ENCODE measurements at regions of chr6 and their contacts with region 1.

Region 1: DNA sequence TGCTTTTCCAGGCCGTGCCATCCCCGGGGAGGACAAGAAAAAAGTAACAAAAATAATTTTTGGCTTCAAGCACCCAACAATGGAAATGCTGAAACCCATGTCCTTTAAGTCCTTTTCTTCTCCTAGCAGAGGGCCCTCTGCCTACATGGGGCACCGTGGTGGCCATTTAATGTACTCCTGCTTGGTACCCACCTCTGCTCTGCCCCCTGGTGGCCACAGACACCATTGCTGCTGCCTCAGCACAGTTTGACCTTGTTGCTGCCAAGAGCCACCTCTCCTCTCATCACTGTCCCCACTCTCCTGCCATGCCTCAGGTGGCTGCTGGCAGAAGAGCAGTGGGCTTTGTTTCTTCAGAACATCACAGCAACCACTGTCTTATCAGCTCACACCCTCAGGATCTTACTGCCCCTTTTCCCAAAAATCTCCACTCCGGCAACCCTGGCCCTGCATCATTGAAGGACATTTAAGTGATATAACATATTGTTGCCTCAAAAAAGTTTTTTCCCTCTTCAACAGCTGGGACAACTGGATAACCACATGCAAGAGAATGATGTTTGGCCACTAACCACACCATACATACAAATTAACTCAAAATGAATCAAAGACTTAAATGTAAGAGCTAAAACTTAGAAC is 12.9 kb upstream of the ARMC2 start:
- DNase-seq: peak; percentile 71
- H3K4me3 Mint-ChIP-seq: no peak overlapping the region
- H3K27ac Mint-ChIP-seq: no peak overlapping the region
- H3K4me1 Mint-ChIP-seq: peaks cover 26% of the 10 kb centered on the region
- H3K27me3 Mint-ChIP-seq: peaks cover 20% of the 10 kb centered on the region

Region 2: GRCh38 chr6:108476847-108477430 is 358.4 kb before region 1 on chr6:
- intact Hi-C with region 1: no loop called
- DNase-seq: no peak
- H3K4me3 Mint-ChIP-seq: no peak overlapping the region
- H3K27ac Mint-ChIP-seq: no peak overlapping the region
- H3K4me1 Mint-ChIP-seq: peaks cover 2% of the 10 kb centered on the region
- H3K27me3 Mint-ChIP-seq: peaks cover 24% of the 10 kb centered on the region

Region 3: DNA sequence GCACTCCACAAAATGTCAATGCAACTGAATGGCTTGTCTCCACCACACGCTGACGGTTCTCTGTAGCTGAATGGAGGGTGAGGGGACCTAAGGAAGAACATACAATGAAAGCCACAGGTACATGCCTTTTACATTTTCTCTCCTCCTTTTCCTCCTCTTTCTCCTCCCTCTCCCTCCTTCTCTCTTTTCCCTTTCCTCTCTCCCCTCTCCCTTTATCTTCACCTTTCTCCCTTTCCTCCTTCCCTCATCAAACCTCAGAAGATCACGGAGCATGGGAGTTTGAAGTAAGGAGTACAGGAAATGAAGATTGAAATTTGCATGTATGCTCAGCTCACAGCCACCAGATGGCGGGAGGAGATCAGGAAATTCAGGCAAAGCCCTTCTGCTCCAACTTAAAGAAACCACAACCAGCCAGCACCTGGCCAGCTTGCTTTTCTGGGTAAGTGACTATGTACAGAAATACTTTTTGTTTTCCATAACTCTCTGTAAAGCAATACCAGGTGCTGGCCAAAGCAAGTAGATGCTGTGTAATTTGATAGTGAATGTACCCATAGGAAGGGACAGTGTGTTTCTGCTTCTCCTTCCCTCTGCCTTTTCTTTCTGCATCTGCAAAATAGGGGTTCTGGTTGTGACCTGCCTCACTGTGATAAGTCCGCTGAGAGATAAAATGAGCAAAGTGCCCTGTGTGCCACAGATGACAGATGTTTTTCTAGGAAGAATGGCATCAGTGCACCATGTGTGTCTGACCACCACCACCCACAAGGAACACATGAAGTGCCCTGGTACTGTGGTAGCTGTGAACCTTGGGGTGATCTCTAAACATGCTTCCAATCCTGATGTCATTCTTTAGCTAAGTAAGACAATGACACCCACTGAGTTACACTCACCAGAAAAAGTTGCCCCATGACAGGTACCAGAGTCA is 293.2 kb before region 1 on chr6:
- intact Hi-C with region 1: loop called (anchors 1 kb)
- DNase-seq: peak; percentile 53
- H3K4me3 Mint-ChIP-seq: no peak overlapping the region
- H3K27ac Mint-ChIP-seq: no peak overlapping the region
- H3K4me1 Mint-ChIP-seq: peaks cover 15% of the 10 kb centered on the region
- H3K27me3 Mint-ChIP-seq: peaks cover 42% of the 10 kb centered on the region

Region 4: GRCh38 chr6:108609276-108609769 is 226.0 kb before region 1 on chr6:
- intact Hi-C with region 1: no loop called
- DNase-seq: no peak
- H3K4me3 Mint-ChIP-seq: no peak overlapping the region
- H3K27ac Mint-ChIP-seq: no peak overlapping the region
- H3K4me1 Mint-ChIP-seq: no peaks in the 10 kb centered on the region
- H3K27me3 Mint-ChIP-seq: peaks cover 17% of the 10 kb centered on the region

Region 5: DNA sequence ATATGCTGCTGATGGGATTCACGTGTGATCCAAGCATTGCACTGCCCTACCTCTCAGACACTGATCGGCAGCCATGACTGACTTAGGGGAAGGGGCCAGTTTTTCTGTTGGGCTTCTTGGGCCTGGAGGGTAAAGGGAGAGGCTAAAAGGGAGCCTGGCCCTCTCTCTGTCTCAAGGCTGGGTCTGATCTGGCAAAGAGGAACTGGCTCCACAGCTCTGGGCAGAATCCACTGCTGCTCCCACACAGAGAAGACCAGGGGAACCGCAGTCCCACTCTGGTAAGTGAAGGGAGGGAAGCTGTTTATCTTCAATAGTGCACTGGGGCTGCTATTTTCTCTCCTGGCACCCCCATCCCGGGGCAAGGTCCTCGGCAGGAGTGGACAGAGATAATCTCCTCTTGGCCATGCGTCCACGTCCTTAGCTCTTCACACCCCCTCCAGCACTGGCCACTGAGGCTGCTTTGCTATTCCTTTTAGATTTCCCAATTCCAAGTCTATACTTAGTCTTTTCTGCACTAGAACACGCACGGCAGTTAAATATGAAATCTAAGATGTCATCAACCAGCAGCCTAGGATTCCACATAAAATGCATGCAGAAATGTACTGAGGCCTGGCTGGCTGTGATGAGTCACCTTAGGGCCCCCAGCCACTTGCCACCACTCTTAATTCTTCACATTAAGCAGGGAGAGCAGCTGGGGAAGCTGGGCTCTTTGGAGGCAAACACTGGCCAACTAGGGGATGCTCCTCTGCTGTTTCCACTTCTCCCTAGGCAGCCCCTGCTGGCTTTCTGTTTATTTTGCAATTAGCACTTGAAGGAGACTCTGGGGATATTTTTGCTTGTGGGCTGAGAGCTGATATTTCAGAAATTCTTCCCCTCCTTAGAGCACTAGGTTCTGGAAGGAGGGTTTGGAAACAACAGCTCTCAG is 74.9 kb before region 1 on chr6:
- intact Hi-C with region 1: no loop called
- DNase-seq: no peak
- H3K4me3 Mint-ChIP-seq: no peak overlapping the region
- H3K27ac Mint-ChIP-seq: no peak overlapping the region
- H3K4me1 Mint-ChIP-seq: peaks cover 5% of the 10 kb centered on the region
- H3K27me3 Mint-ChIP-seq: peaks cover 36% of the 10 kb centered on the region

Region 6: DNA sequence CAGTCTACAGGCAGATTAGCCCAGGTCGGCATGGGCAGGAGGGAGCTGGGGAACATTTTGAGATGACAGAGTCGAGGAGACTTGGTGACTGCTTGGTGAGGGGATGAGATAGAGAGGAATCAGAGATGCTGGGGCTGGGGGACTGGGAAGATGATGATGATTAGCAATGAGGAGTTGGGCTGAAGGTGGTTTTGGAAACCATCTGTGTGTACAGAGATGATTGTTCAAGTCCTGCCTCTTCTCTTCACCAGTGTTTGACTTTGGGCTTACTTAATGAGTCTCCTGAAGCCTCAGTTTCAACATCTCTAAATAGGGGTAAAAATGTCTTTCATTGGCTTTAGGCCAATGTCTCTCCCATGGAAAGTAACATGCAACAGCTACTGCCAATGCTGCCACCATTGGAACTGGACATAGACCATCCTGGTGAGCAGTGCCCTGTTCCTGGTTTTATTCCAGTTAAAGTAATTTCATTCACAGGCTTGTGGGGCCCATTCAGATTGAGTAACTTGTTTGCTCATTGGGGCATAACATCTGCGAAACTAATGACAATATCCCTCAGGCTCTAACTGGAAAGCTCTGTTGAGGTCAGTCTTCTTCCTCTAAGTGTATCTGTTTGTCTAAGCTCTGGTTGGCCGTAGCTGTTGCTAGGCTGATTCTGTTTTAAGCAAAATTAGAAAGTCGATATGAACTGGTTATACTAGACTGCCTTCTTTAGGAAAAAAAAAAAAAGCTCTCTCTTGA is 112.0 kb after region 1 on chr6:
- intact Hi-C with region 1: no loop called
- DNase-seq: no peak
- H3K4me3 Mint-ChIP-seq: no peak overlapping the region
- H3K27ac Mint-ChIP-seq: peak overlapping the region; percentile 73
- H3K4me1 Mint-ChIP-seq: peaks cover 50% of the 10 kb centered on the region
- H3K27me3 Mint-ChIP-seq: no peaks in the 10 kb centered on the region

Measured in activated T-helper 2 cell treated with anti-CD3 and anti-CD28 coated beads, Interferon-gamma antibody, Interleukin-2, Interleukin-4, amounts not matched to agents 10 μg/mL and 5 μg/mL and 100 μg/mL, durations not matched to agents 14 hours and 24 hours and 36 hours (primary cell).